ENCODE measurements at regions of chr18 and their contacts with region 1.

Region 1: GRCh38 chr18:32761231-32761630 is 11.6 kb downstream of the KLHL14 start:
- DNase-seq: no peak
- ATAC-seq: no peak
- H3K4me3 ChIP-seq: no peak overlapping the region
- H3K27ac ChIP-seq: no peak overlapping the region
- H3K4me1 ChIP-seq: no peaks in the 10 kb centered on the region; the same call in 1 of the 2 replicates
- H3K27me3 ChIP-seq: no peaks in the 10 kb centered on the region
- CTCF ChIP-seq: no peak

Region 2: GRCh38 chr18:32730620-32731091 is 30.6 kb before region 1 on chr18:
- CTCF ChIA-PET with region 1: no interaction called
- POLR2A ChIA-PET with region 1: interaction called, 11 read pairs
- in situ Hi-C with region 1: no loop called
- intact Hi-C with region 1: no loop called
- DNase-seq: peak; percentile 38
- ATAC-seq: peak; percentile 80
- H3K4me3 ChIP-seq: peak overlapping the region; percentile 44 to 54
- H3K27ac ChIP-seq: peak overlapping the region; percentile 78
- H3K4me1 ChIP-seq: no peaks in the 10 kb centered on the region
- H3K27me3 ChIP-seq: no peaks in the 10 kb centered on the region
- CTCF ChIP-seq: no peak

Region 3: GRCh38 chr18:33090461-33090860 is 329.2 kb after region 1 on chr18:
- CTCF ChIA-PET with region 1: no interaction called
- POLR2A ChIA-PET with region 1: no interaction called
- in situ Hi-C with region 1: no loop called
- intact Hi-C with region 1: no loop called
- DNase-seq: no peak
- ATAC-seq: no peak
- H3K4me3 ChIP-seq: no peak overlapping the region
- H3K27ac ChIP-seq: no peak overlapping the region
- H3K4me1 ChIP-seq: no peaks in the 10 kb centered on the region
- H3K27me3 ChIP-seq: no peaks in the 10 kb centered on the region
- CTCF ChIP-seq: no peak

Region 4: GRCh38 chr18:33239298-33239697 is 478.1 kb after region 1 on chr18:
- CTCF ChIA-PET with region 1: no interaction called
- POLR2A ChIA-PET with region 1: no interaction called
- in situ Hi-C with region 1: no loop called
- intact Hi-C with region 1: no loop called
- DNase-seq: no peak
- ATAC-seq: no peak
- H3K4me3 ChIP-seq: no peak overlapping the region
- H3K27ac ChIP-seq: no peak overlapping the region
- H3K4me1 ChIP-seq: no peaks in the 10 kb centered on the region
- H3K27me3 ChIP-seq: no peaks in the 10 kb centered on the region
- CTCF ChIP-seq: no peak

Measured in Panc1 (cell line).